Left ventricle myocardium inferior (tissue), 1 donor: ENCODE measurements at regions of chr1 and their contacts with region 1.

Region 1: DNA sequence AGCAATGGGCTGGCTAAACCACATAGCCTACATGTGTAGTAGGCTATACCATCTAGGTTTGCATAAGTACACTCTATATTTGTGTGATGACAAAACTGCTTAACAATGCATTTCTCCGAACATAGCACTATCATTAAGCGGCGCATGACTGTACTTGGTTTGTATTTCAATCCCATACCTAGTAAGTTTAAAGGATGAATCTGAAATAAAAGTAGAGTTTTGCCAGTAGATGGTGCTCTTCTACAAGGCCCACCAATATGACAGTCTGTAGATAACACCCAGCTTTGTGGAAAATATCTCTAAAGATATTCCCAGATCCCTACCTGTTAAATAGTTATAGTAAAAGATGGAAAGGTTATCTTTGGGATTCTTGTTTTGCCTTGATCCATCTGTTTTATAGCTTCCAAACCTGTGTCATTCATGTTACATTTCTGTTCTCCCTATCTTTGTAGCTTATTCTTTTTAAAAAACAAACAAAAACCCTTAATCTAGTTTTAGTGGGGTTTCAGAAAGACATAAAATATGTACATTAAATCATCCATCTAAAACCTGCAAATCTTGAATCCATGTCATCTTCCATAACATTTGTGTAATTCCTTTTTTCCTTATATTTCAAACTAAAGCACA is 33.9 kb upstream of the ASPM start:
- DNase-seq: no peak
- H3K4me3 ChIP-seq: no peak overlapping the region
- H3K27ac ChIP-seq: no peak overlapping the region
- H3K4me1 ChIP-seq: peaks cover 16% of the 10 kb centered on the region
- H3K27me3 ChIP-seq: no peaks in the 10 kb centered on the region
- CTCF ChIP-seq: peak; percentile 71

Region 2: GRCh38 chr1:196997423-196997822 is 182.9 kb before region 1 on chr1:
- intact Hi-C with region 1: no loop called
- DNase-seq: no peak
- H3K4me3 ChIP-seq: no peak overlapping the region
- H3K27ac ChIP-seq: no peak overlapping the region
- H3K4me1 ChIP-seq: no peaks in the 10 kb centered on the region
- H3K27me3 ChIP-seq: no peaks in the 10 kb centered on the region
- CTCF ChIP-seq: no peak

Region 3: DNA sequence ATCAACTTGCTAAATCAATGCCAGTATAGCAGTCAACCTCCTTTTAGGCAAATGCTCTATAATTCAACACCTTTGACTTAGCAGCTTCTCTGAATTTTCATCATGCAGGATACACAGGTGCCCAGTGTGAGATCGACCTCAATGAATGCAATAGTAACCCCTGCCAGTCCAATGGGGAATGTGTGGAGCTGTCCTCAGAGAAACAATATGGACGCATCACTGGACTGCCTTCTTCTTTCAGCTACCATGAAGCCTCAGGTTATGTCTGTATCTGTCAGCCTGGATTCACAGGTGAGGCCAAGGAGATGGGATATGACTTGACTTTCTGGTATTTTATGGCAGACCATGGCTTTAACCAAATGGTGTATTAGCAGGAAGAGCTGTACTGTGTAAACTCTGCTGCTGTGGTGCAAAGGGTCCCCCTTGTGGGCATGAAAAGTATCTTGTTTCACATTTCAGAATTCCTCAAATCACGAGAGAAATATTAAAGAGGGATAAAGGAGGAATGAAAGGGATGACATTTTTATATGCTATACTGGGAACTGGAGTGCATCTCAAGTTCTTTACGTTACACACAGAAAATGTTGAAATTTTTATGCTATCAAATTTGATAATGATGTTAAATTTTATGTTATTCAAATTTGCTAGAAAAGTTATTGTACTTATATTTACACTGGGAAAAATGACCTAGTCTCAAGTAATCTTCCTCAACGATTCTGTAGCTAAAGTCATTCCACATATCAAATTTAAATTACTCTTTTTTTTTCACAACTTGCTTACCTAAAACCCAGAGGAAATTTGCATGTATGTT is 176.6 kb after region 1 on chr1:
- intact Hi-C with region 1: loop called (anchors 5 kb)
- DNase-seq: no peak
- H3K4me3 ChIP-seq: no peak overlapping the region
- H3K27ac ChIP-seq: no peak overlapping the region
- H3K4me1 ChIP-seq: peaks cover 5% of the 10 kb centered on the region
- H3K27me3 ChIP-seq: no peaks in the 10 kb centered on the region
- CTCF ChIP-seq: peak; percentile 76